Caco-2 (cell line): ENCODE measurements at regions of chr7 and their contacts with region 1.

Region 1: DNA sequence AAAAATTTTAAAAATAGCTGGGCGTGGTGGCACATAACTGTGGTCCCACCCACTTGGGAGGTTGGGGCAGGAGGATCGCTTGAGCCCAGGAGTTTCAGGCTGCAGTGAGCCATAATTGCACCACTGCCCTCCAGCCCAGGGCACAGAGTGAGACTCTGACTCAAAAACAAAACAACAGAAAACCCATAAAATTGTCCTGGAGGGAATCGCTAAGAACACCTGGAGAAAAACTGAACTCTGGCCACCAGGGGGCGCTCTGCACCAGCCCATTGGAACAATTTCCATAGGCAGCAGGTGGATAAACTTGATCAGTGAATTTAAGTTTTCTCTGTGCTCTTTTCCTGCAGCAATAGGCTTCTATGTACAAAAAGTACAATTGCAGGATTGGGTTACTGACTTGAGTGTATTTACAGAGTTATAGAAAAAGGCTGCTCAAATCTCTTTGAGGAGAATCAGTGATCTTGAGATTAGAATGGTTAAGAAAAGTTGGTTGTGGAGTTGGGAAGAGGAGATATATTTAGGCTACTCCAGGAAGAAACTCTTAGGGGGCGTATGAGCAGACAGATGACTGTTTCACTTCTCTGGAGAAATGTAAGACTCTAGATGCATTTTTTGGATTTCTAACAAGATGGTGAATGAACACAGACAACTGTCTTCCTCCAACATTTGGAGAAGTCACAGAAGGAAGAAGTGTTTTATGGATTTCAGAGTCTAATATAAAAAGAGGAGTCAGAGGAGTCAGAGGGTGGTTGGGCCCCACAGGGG is 274.9 kb upstream of the GALNT17 start:
- DNase-seq: peak; percentile 55 to 76
- H3K4me3 ChIP-seq: no peak overlapping the region
- H3K4me3 Mint-ChIP-seq: no peak overlapping the region
- H3K27ac Mint-ChIP-seq: no peak overlapping the region
- H3K4me1 ChIP-seq: no peaks in the 10 kb centered on the region
- H3K4me1 Mint-ChIP-seq: no peaks in the 10 kb centered on the region
- H3K27me3 ChIP-seq: no peaks in the 10 kb centered on the region
- H3K27me3 Mint-ChIP-seq: no peaks in the 10 kb centered on the region
- CTCF ChIP-seq: peak; percentile 76 to 91

Region 2: DNA sequence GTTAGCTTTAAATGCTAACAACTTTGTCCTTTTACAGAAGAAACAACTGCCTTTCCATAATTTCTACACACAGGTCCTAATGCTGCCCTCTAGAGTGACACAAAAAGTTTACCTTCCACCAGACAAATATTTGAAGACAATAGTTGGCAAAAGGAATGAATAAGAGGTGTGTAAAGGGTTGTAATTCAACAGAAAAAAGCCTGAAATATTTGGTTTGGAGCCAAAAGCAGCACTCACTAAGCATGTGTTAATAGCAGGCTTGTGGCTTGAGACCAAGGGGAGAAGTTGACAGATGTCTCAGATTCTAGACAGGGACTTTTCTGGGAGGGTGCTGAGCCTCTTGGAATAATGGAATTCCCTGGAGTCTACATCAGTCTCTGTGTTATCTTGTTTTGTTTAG is 118.7 kb after region 1 on chr7:
- CTCF ChIA-PET with region 1: no interaction called
- POLR2A ChIA-PET with region 1: no interaction called
- intact Hi-C with region 1: loop called (anchors 5 kb)
- DNase-seq: no peak
- H3K4me3 ChIP-seq: no peak overlapping the region
- H3K4me3 Mint-ChIP-seq: no peak overlapping the region
- H3K27ac Mint-ChIP-seq: no peak overlapping the region
- H3K4me1 ChIP-seq: no peaks in the 10 kb centered on the region
- H3K4me1 Mint-ChIP-seq: no peaks in the 10 kb centered on the region
- H3K27me3 ChIP-seq: no peaks in the 10 kb centered on the region
- H3K27me3 Mint-ChIP-seq: no peaks in the 10 kb centered on the region
- CTCF ChIP-seq: no peak

Region 3: GRCh38 chr7:71723859-71724258 is 866.8 kb after region 1 on chr7:
- CTCF ChIA-PET with region 1: no interaction called
- POLR2A ChIA-PET with region 1: no interaction called
- intact Hi-C with region 1: loop called (anchors 5 kb)
- DNase-seq: no peak
- H3K4me3 ChIP-seq: no peak overlapping the region
- H3K4me3 Mint-ChIP-seq: no peak overlapping the region
- H3K27ac Mint-ChIP-seq: no peak overlapping the region
- H3K4me1 ChIP-seq: no peaks in the 10 kb centered on the region
- H3K4me1 Mint-ChIP-seq: no peaks in the 10 kb centered on the region
- H3K27me3 ChIP-seq: no peaks in the 10 kb centered on the region
- H3K27me3 Mint-ChIP-seq: no peaks in the 10 kb centered on the region
- CTCF ChIP-seq: no peak